PC-3 (cell line): ENCODE measurements at regions of chr1 and their contacts with region 1.

Region 1: DNA sequence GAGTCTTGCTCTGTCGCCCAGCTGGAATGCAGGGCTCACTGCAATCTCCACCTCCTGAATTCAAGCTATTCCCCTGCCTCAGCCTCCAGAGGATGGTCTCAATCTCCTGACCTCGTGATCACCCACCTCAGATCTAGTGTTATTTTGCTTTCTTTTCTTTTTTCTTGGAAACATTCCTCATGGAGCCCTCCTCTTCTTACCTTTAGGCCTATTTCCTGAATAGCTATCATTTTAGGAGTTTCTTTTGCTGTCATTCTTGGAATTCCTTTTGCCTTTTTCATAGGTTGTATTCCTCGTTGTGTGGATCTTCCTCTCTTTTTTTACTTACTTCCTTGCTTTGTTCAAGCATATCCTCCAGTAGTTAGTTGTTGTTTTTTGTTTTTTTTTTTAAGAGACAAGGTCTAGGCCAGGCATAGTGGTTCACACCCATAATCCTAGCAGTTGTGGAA is 173.8 kb downstream of the RASAL2 start:
- DNase-seq: peak; percentile 65
- ATAC-seq: peak; percentile 43
- H3K4me3 ChIP-seq: no peak overlapping the region
- H3K27ac ChIP-seq: peak overlapping the region; percentile 5; the same call in 1 of the 2 replicates
- H3K4me1 ChIP-seq: peaks cover 12% of the 10 kb centered on the region
- H3K27me3 ChIP-seq: no peaks in the 10 kb centered on the region
- CTCF ChIP-seq: no peak

Region 2: DNA sequence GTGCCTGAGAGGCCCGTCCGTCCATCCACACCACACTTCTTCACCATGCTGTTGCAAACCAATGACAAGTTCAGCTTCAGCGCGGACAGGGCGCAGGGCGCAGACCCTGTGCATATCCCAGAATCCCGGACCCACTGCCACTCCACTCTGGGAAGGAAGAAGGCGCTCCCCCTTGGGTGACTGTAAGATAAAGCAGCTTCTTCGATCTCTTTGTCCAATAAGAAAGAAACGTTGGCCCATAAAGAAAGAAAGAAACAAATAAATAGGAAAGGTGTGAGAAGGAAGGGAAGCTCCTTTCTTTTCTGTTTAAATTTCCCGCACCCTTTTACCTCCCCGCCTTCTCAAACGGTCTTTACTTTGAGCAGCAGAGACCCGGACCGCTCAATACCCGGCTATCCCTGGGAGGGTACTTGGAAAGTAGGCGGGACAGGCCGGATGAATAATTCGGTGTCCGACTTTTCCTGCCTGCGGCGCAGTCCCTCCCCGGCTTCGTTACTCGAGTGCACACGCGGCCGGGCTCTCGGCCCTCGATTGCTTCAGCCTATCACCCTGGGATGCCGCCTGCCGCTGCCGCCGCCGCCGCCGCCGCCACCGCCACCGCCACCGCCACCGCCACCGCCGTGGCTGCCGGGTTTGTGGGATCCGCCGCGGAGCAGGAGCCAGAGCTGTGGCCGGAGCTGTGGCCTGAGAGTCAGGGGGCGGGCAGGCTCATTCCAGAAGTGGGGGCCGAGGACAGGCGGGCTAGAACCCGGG is 174.3 kb before region 1 on chr1:
- CTCF ChIA-PET with region 1: no interaction called
- POLR2A ChIA-PET with region 1: interaction called, 13 read pairs
- intact Hi-C with region 1: no loop called
- DNase-seq: peak; percentile 92
- ATAC-seq: peak; percentile 80
- H3K4me3 ChIP-seq: peak overlapping the region; percentile 83
- H3K27ac ChIP-seq: peak overlapping the region; percentile 54
- H3K4me1 ChIP-seq: peaks cover 41% of the 10 kb centered on the region
- H3K27me3 ChIP-seq: no peaks in the 10 kb centered on the region
- CTCF ChIP-seq: no peak